ENCODE measurements at regions of chr3 and their contacts with region 1.

Region 1: GRCh38 chr3:19931180-19931692 is 2.8 kb downstream of the EFHB start:
- DNase-seq: no peak
- H3K4me3 ChIP-seq: no peak overlapping the region
- H3K27ac ChIP-seq: peak overlapping the region; percentile 76
- H3K4me1 ChIP-seq: peaks cover 18% of the 10 kb centered on the region
- H3K27me3 ChIP-seq: no peaks in the 10 kb centered on the region
- CTCF ChIP-seq: no peak

Region 2: GRCh38 chr3:19598870-19599269 is 332.4 kb before region 1 on chr3:
- CTCF ChIA-PET with region 1: no interaction called
- POLR2A ChIA-PET with region 1: no interaction called
- intact Hi-C with region 1: no loop called
- DNase-seq: no peak
- H3K4me3 ChIP-seq: no peak overlapping the region
- H3K27ac ChIP-seq: no peak overlapping the region
- H3K4me1 ChIP-seq: no peaks in the 10 kb centered on the region
- H3K27me3 ChIP-seq: no peaks in the 10 kb centered on the region
- CTCF ChIP-seq: no peak

Region 3: GRCh38 chr3:19946832-19947548 is 15.8 kb after region 1 on chr3 and contains the start of gene RAB5A:
- CTCF ChIA-PET with region 1: no interaction called
- POLR2A ChIA-PET with region 1: no interaction called
- intact Hi-C with region 1: loop called (anchors 2 kb)
- DNase-seq: peak; percentile 91 to 96
- H3K4me3 ChIP-seq: peak within 1 kb of the TSS; percentile 69
- H3K27ac ChIP-seq: peak within 1 kb of the TSS; percentile 97
- H3K4me1 ChIP-seq: peaks cover 32% of the 10 kb centered on the region
- H3K27me3 ChIP-seq: no peaks in the 10 kb centered on the region
- CTCF ChIP-seq: no peak
- total RNA-seq, gene RAB5A: 62.7 and 65.1 TPM in 2 replicates